BJ (cell line): ENCODE measurements at regions of chr20 and their contacts with region 1.

Region 1: GRCh38 chr20:8389381-8390036 is 257.4 kb downstream of the PLCB1 start:
- DNase-seq: no peak
- H3K4me3 ChIP-seq: no peak overlapping the region
- H3K27me3 ChIP-seq: no peaks in the 10 kb centered on the region
- CTCF ChIP-seq: peak; percentile 38

Region 2: DNA sequence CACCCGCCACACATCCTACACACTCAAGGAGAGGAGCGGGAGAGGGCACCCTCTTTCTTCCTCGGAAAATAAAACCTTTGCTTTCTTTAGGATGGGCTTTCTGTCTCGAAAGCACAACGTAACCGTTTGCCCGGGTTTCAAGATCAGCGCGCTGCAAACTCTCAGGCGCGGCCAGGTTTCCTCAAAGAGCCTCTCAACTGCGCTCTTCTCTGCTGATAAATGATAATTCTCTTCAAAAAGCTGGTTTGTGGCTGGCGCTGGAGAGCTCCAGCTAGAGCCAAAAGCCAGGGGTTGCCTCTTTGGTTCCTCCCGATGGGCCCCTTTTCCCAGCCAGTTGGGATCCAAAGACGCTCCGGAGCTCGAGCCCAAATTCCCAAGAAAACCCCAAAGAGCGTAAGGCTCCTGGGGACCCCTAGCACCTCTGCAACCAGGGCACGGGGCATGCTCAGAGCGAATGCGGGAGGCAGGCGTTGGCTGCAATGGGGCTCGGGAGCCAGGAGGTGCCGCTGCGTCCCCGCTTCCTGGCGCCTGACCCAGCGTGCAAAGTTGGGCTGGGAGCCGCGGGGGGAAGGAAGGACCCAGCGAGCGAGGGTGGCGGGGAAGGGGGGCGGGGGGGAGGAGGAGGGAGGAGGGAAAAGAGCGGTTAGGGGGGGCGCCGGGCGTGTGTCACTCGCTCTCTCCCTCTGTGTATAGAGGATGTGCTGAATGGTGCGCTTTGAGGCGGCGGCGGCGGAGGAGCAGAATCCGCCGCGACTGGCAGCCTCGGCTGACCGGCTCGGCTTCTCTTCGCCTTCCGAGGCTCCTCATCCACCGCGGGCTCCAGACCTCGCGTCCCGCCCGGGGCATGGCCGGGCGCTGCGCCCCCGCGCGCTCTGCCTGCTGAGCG is 257.7 kb before region 1 on chr20 and contains the start of gene PLCB1:
- CTCF ChIA-PET with region 1: interaction called, 30 read pairs
- POLR2A ChIA-PET with region 1: no interaction called
- DNase-seq: no peak
- H3K4me3 ChIP-seq: peak within 1 kb of the TSS; percentile 76
- H3K27me3 ChIP-seq: no peaks in the 10 kb centered on the region
- CTCF ChIP-seq: peak; percentile 94
- polyA plus RNA-seq, gene PLCB1: 13.5 and 15.2 TPM in 2 replicates

Region 3: GRCh38 chr20:8401556-8401955 is 12.0 kb after region 1 on chr20:
- CTCF ChIA-PET with region 1: interaction called, 11 read pairs
- POLR2A ChIA-PET with region 1: no interaction called
- DNase-seq: no peak
- H3K4me3 ChIP-seq: no peak overlapping the region
- H3K27me3 ChIP-seq: no peaks in the 10 kb centered on the region
- CTCF ChIP-seq: no peak